ENCODE measurements at regions of chr11 and their contacts with region 1.

Region 1: GRCh38 chr11:14258221-14258935 is 100.6 kb downstream of the RRAS2 start:
- ATAC-seq: peak in 5 of 8 experiments; percentile 45 to 83 (median 61)
- H3K4me3 ChIP-seq: no peak overlapping the region
- H3K27ac ChIP-seq: no peak overlapping the region
- H3K4me1 ChIP-seq: no peaks in the 10 kb centered on the region

Region 2: GRCh38 chr11:13761712-13762111 is 496.7 kb before region 1 on chr11:
- in situ Hi-C with region 1: loop called in 1 of 9 experiments (anchors 10 kb)
- ATAC-seq: no peak
- H3K4me3 ChIP-seq: no peak overlapping the region
- H3K27ac ChIP-seq: no peak overlapping the region
- H3K4me1 ChIP-seq: peaks cover 5 to 15% of the 10 kb centered on the region in 2 donors

Region 3: DNA sequence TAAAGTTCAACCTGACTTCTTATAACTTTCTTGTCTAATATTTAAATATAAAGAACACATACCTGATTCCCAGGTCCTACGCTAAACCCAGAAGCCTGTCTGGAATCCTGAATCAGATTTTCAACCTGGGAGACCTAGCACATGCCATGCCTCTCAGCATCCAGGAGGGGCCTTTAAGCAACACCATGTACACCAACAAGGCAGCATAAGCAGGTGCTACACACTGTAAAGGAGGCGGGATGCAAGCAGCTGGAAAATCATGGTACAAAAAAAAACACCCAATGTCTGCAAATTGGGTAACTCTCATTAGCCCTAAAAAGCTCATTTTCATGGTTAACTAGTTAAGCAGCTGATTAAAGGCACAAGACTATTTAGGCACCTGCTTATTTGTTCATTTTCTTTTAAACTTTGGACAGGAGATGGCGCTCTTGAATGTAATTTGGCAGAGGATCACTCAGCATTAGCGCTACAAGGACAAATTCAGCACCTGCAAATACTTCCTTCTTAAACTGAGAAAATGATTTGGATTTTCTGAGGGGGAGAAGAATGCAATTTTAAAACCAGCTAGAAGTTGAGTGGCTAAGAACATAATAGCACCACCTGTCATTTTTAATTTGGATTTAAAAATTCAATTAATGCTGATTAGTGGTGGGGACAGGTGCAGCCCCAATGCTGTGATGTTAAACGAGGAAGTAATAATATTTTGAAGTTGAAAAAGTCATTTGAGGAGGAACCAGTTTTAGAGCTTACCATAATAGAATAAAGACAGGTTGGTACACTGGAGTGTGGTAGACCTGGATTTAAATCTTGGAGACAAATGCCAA is 485.9 kb before region 1 on chr11:
- in situ Hi-C with region 1: loop called in 4 of 9 experiments (anchors 10 kb)
- ATAC-seq: peak; percentile 60 to 79 (median 72)
- H3K4me3 ChIP-seq: no peak overlapping the region
- H3K27ac ChIP-seq: no peak overlapping the region
- H3K4me1 ChIP-seq: no peaks in the 10 kb centered on the region

Region 4: GRCh38 chr11:13955971-13956421 is 302.4 kb before region 1 on chr11:
- in situ Hi-C with region 1: loop called in 1 of 9 experiments (anchors 10 kb)
- ATAC-seq: peak in 5 of 8 experiments; percentile 37 to 62 (median 46)
- H3K4me3 ChIP-seq: no peak overlapping the region
- H3K27ac ChIP-seq: no peak overlapping the region
- H3K4me1 ChIP-seq: peaks cover 21% of the 10 kb centered on the region in 2 donors

Region 5: DNA sequence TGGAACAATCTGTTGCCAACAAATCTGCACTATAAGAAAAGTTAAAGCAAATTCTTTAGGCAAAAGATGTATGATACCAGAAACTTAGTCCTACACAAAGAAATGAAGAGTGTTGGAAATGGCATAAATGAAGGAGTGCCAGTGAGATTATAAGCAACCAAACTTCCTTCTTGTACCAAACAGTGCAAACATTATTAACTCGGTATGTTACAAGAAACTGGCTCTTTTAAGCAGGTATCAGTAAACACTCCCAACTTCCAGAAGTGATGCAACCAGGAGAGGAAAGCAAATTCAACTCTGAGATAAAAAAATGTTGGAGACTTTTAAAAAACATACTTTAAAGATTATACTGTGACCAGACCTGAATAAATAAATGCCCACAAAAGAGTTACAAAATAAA is 212.7 kb after region 1 on chr11:
- in situ Hi-C with region 1: no loop called
- ATAC-seq: no peak
- H3K4me3 ChIP-seq: no peak overlapping the region
- H3K27ac ChIP-seq: no peak overlapping the region
- H3K4me1 ChIP-seq: no peaks in the 10 kb centered on the region

Measured in motor neuron (in vitro differentiated cells).